ENCODE measurements at regions of chr9 and their contacts with region 1.

Region 1: DNA sequence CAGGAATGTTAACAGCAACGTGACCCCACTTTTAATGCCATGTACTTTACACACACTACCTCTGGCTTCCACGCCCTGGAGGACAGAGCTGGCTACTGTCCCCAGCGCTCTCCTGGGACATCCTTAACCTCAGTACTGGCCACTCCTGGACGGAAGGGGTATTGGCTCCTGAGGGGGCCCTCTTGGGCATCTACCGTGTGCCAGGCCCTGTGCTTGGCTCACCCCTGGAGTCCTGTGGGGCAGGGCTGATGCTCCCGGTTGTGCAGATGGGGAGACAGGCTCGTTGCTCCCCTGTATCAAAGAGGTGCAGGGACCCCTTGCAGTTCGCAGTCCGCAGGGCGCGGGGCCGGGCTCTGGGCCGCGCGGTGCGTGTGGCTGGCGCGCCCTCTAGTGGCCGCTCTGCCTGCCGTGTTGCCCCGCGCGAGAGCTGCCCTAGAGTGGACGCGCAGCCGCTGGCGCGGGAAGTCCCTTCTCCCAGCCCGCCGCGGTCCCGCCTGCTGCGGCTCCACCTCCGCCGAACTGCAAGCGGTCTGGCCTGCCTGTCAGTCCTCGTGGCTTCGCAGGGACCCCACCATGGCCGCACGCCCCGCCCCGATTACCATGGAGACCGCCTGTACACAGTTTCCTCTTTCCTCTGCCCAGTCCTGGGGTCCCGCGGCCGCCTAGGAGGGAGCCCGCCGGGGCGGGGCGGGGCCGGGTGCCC is at the start of gene WDR38:
- DNase-seq: peak; percentile 70
- H3K4me3 Mint-ChIP-seq: peak within 1 kb of the TSS; percentile 66
- H3K27ac Mint-ChIP-seq: peak within 1 kb of the TSS; percentile 27
- H3K4me1 Mint-ChIP-seq: no peaks in the 10 kb centered on the region
- H3K27me3 Mint-ChIP-seq: no peaks in the 10 kb centered on the region
- CTCF ChIP-seq: peak; percentile 92
- total RNA-seq, gene WDR38: not detected in 2 replicates

Region 2: DNA sequence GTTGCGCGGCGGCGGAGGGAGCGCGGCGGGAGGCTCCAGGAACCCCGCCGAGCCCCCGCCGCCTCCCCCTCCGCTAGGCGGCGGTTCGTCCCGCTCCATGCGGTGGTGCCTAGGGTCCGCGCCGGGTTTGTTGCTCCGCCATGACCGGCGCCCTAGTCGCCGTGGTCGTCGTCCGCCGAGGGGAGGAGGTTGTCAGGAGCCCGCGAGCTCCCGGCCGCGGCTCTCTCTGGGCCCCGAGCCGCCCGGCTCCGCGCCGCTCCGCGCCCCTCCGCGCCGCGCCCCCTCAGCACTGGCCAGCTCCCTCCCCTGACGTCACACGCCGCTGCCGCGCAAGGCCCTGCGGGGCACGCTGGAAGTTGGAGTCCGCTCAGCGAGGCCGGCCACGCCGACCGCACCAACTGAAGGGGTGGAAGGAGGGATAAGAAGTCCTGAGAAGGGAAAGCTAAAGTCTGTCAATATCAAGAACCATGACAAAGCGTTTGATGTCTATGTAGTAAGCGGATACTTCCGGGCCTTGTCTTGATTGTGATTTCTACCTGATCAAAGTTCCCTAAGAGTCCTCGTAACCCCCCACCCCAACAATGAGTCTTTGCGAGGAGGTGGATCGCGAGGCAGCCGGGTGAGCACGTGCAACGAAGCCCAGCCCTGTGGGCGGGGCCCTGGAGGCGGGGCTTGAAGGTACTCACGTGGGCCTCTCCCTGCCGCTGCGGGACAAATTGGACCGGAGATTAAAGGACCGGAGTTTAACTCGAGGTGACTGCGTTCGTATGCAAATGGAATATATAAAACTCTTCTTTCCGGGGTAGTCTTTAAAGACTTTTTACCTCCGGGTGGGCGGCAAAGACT is 81.7 kb before region 1 on chr9 and contains the start of gene NR6A1:
- CTCF ChIA-PET with region 1: interaction called, 80 read pairs
- intact Hi-C with region 1: loop called (anchors 1 kb)
- DNase-seq: peak; percentile 95
- H3K4me3 Mint-ChIP-seq: peak within 1 kb of the TSS; percentile 97
- H3K27ac Mint-ChIP-seq: peak within 1 kb of the TSS; percentile 97
- H3K4me1 Mint-ChIP-seq: peaks cover 20% of the 10 kb centered on the region
- H3K27me3 Mint-ChIP-seq: peaks cover 5% of the 10 kb centered on the region
- CTCF ChIP-seq: peak; percentile 21
- total RNA-seq, gene NR6A1: 5.9 and 6.7 TPM in 2 replicates

Region 3: DNA sequence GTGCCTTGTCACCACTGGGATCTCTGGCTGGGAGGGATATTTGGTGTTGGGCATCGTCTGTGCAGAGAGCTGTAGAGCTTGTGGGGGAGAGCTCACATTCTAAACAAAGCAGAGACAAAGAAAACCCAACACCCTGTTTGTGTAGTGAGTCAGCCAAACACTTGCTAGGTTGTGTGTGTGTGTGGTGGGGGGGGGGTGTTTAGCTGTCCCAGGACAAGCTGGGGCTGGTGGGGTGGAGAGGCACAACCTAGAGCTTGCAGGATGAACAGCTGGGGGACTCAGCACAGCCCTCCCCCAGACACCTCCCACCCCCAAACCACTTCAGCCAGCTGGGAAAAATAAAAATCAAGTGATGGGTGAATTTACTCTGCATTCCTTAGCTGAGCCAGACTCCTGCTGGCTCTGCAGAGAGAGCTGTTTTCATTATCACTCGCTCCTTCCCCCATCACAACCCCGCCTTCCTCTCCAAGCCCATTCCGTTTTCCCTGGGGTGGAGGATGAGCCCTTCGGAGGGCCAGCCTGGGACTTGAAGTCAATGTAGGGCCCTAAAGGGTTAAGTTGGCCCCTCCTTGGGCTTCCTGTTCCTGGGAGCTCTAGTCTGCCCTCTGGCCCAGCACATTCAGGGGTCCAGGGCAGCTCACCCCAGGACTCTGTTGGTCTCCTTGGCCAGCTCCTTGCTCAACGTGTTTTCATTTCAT is 73.5 kb before region 1 on chr9:
- CTCF ChIA-PET with region 1: interaction called, 80 read pairs
- intact Hi-C with region 1: loop called (anchors 1 kb)
- DNase-seq: peak; percentile 32
- H3K4me3 Mint-ChIP-seq: no peak overlapping the region
- H3K27ac Mint-ChIP-seq: no peak overlapping the region
- H3K4me1 Mint-ChIP-seq: peaks cover 25% of the 10 kb centered on the region
- H3K27me3 Mint-ChIP-seq: peaks cover 8% of the 10 kb centered on the region
- CTCF ChIP-seq: no peak

Region 4: GRCh38 chr9:124794902-124795491 is 58.0 kb before region 1 on chr9:
- CTCF ChIA-PET with region 1: interaction called, 22 read pairs
- intact Hi-C with region 1: loop called (anchors 1 kb)
- DNase-seq: peak; percentile 66
- H3K4me3 Mint-ChIP-seq: no peak overlapping the region
- H3K27ac Mint-ChIP-seq: no peak overlapping the region
- H3K4me1 Mint-ChIP-seq: no peaks in the 10 kb centered on the region
- H3K27me3 Mint-ChIP-seq: peaks cover 25% of the 10 kb centered on the region
- CTCF ChIP-seq: peak; percentile 22

Region 5: DNA sequence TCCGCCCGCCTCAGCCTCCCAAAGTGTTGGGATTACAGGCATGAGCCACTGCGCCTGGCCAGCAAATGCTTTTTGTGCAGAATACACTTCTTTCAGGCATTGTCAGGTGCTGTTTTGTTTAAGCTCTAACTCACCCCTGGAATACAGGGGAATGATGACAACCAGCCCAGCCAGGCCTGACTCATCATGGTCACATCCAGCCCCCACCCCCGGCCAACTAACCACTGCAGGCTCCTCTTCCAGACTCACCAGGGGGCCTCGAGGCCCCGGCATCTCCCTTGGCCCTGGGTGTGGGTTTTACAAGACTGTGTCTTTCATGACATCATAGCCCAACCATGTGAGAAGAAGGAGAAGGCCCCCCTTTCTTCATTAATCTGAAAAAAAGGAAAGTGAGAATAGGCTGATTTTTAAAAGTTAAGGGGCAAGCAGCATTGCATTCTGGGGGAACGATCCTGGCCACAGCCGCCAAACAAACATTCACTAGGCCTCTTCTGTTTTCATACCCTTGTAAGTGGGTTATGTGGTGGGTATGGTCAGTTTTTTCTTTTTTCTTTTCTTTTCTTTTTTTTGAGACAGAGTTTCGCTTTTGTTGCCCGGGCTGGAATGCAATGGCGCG is 40.5 kb before region 1 on chr9:
- CTCF ChIA-PET with region 1: no interaction called
- intact Hi-C with region 1: loop called (anchors 5 kb)
- DNase-seq: peak; percentile 48
- H3K4me3 Mint-ChIP-seq: no peak overlapping the region
- H3K27ac Mint-ChIP-seq: no peak overlapping the region
- H3K4me1 Mint-ChIP-seq: peaks cover 25% of the 10 kb centered on the region
- H3K27me3 Mint-ChIP-seq: no peaks in the 10 kb centered on the region
- CTCF ChIP-seq: no peak

Region 6: DNA sequence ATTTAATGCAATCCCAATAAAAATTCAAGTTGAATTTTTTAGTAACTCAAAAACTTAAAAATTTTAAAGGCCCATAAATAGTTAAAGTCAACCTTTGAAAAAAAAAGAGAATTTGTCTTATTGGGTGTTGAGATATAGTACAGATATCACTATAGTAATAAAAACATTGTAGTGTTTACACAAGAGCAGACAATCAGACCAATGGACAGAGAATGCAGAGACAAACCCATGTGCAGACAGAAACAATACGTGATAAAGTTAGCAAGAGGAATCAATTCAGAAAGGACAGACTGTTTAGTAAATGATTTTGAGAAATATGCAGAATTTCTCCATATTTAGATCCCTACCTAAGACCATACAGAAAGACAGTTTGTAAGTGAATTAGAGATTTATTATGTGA is 54.0 kb after region 1 on chr9:
- CTCF ChIA-PET with region 1: no interaction called
- intact Hi-C with region 1: no loop called
- DNase-seq: no peak
- H3K4me3 Mint-ChIP-seq: no peak overlapping the region
- H3K27ac Mint-ChIP-seq: no peak overlapping the region
- H3K4me1 Mint-ChIP-seq: no peaks in the 10 kb centered on the region
- H3K27me3 Mint-ChIP-seq: no peaks in the 10 kb centered on the region
- CTCF ChIP-seq: no peak